Activated CD4-positive, alpha-beta T cell treated with anti-CD3 and anti-CD28 coated beads, Interleukin-2, amount 10 ng/mL, durations not matched to agents 24 days and 14 days (primary cell): ENCODE measurements at regions of chr1 and their contacts with region 1.

Region 1: DNA sequence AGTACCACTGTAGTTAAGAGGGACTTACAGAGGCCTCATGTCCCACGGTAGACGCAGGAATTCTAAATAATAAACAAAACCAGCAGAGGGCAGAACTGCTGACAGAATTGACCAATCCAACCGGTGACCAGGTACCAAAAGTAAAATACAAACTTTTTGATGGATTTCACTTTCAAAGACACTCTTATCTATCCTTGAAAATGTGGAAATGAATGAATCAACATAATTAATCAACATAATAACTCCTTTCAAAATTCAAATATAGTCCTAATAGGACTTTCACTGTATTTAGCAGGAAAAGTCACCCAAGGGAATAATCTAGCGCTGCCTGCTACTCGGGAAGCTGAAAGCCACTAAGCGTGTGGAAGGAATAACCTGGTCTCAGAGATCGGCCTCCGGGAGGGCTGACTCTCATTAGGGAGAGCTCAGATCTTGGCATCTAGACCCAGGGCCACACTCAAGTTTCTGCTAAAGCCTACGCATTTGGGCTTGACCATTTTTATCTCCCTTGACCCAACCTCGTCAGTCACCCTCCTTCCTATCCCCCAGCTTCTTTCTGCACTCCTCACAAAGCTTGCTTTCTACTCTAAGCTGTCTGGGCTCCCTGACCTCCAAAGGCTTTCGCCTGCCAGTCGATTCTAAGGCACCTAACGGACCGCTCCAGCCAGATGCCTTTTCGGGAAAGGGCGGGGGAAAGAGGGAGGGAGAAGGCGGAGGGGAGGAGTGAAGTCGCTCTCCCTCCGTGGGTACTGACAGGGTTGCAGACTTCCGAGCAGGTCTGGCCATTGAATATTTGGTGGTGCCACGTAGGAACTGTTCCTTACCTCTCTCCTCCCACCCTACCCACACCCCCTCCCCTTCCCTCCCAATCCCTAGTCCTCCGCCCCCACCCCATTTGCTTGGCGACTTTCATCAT is 1.6 kb downstream of the COL11A1 start:
- DNase-seq: no peak
- H3K4me3 Mint-ChIP-seq: peak overlapping the region; percentile 30
- H3K27ac Mint-ChIP-seq: no peak overlapping the region
- H3K4me1 Mint-ChIP-seq: no peaks in the 10 kb centered on the region
- H3K27me3 Mint-ChIP-seq: peaks cover 28% of the 10 kb centered on the region

Region 2: GRCh38 chr1:103220631-103221041 is 114.0 kb after region 1 on chr1:
- intact Hi-C with region 1: no loop called
- DNase-seq: no peak
- H3K4me3 Mint-ChIP-seq: no peak overlapping the region
- H3K27ac Mint-ChIP-seq: no peak overlapping the region
- H3K4me1 Mint-ChIP-seq: no peaks in the 10 kb centered on the region
- H3K27me3 Mint-ChIP-seq: no peaks in the 10 kb centered on the region

Region 3: DNA sequence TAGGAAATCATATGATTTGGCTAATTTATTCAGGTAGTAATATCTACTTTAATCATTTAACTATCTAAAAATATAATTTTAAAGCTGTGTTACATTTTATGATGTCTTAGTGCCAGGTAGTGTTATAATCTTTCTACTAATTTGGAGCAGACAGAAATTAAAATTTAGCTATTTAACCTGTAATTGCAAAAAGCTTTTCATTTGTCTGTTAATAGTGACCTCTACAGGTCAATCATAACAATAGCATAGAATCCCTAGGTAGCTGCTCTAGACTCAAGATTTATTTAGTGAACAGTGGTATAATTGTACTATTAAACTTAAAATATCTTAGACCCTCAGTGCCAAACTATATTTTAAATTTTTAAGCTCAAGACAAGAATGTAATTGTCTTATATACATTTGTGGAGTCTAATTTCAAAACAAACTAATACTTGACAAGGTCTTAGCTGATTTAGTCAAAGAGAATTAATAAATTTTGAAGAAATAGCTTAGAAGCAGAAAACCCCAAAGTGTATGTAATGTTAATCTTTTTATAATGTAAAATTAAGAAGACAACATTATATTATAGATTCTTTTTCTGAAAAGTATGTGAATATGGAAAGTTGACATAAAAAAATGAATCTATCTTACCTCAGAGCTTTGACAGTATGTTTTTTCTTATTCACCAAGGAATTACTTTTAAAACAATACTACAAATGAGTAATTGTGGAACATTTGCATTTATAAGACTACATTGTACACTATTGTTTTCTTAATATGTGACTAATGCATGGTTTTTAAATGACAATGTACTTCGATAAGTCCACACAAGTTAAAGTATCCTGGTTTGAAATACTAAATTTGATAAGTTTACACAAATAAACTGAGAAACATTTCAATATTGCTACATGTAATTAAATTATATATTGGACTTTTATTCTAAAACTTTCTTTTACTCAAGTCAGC is 354.7 kb after region 1 on chr1:
- intact Hi-C with region 1: loop called (anchors 1 kb)
- DNase-seq: no peak
- H3K4me3 Mint-ChIP-seq: no peak overlapping the region
- H3K27ac Mint-ChIP-seq: no peak overlapping the region
- H3K4me1 Mint-ChIP-seq: no peaks in the 10 kb centered on the region
- H3K27me3 Mint-ChIP-seq: peaks cover 3% of the 10 kb centered on the region

Region 4: DNA sequence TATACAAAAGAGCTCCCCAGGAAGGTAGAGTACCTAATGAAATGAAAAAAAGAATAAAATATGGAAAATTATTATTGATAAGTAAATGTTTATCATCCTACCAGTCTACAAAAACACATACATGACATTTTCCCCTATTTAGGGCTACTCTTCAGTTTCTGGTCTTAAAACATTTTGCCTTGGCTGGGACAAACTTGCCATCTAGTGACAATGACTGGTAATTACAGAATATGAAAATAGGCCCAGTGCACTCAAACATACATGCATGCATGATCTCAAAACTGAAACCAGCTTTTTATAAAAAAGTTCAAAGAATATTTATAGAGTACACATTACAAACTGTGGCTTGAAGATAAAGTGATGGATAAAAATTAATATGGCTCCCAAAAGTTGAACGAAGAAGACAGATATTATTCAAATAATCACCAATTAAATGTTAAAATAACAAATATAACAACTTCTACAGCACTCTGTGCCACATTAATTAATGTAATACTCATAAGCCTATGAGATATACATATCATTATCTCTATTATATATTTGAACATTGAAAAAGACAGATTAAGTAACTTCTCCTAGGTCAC is 408.3 kb after region 1 on chr1:
- intact Hi-C with region 1: loop called (anchors 2 kb)
- DNase-seq: peak; percentile 75
- H3K4me3 Mint-ChIP-seq: no peak overlapping the region
- H3K27ac Mint-ChIP-seq: no peak overlapping the region
- H3K4me1 Mint-ChIP-seq: peaks cover 16% of the 10 kb centered on the region
- H3K27me3 Mint-ChIP-seq: no peaks in the 10 kb centered on the region